Head of caudate nucleus (tissue), 42 donors: ENCODE measurements at regions of chr16 and their contacts with region 1.

Region 1: GRCh38 chr16:3400779-3401688 is at the starts of genes ZNF174 and ZSCAN32:
- DNase-seq: peak; percentile 97 to 100 (median 99)

Region 2: GRCh38 chr16:3292604-3293003 is 108.4 kb before region 1 on chr16:
- intact Hi-C with region 1: loop called (anchors 10 kb)
- DNase-seq: no peak